ENCODE measurements at regions of chr11 and their contacts with region 1.

Region 1: GRCh38 chr11:69644071-69644961 is 3.4 kb downstream of the CCND1 start:
- DNase-seq: no peak
- H3K4me3 ChIP-seq: no peak overlapping the region
- CTCF ChIP-seq: no peak
- POLR2A ChIP-seq: no peak

Region 2: GRCh38 chr11:69101115-69101791 is 543.1 kb before region 1 on chr11:
- intact Hi-C with region 1: loop called (anchors 2 kb)
- DNase-seq: peak; percentile 56 to 94
- H3K4me3 ChIP-seq: no peak overlapping the region
- CTCF ChIP-seq: peak in 1 of 3 donors; percentile 92
- POLR2A ChIP-seq: no peak

Region 3: DNA sequence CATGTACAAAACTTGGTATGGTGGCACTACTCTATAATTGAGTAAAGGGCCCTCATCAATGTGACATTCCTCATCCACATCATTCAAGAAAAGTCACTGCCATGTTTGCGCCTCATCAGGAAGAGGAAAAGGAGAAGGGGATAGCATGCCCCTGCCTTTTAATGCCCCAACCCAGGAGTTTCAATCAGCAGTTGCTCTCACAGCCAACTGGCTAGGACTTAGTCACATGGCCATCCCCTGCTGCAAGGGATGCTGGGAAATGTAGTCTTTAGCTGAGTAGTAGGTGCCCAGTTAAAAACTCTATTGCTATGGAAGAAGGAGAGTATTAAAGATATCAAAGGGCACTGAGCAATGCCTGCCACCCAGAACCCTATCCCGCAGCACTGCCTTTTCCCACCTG is 14.3 kb before region 1 on chr11:
- intact Hi-C with region 1: no loop called
- DNase-seq: no peak
- H3K4me3 ChIP-seq: no peak overlapping the region
- CTCF ChIP-seq: no peak
- POLR2A ChIP-seq: no peak

Region 4: DNA sequence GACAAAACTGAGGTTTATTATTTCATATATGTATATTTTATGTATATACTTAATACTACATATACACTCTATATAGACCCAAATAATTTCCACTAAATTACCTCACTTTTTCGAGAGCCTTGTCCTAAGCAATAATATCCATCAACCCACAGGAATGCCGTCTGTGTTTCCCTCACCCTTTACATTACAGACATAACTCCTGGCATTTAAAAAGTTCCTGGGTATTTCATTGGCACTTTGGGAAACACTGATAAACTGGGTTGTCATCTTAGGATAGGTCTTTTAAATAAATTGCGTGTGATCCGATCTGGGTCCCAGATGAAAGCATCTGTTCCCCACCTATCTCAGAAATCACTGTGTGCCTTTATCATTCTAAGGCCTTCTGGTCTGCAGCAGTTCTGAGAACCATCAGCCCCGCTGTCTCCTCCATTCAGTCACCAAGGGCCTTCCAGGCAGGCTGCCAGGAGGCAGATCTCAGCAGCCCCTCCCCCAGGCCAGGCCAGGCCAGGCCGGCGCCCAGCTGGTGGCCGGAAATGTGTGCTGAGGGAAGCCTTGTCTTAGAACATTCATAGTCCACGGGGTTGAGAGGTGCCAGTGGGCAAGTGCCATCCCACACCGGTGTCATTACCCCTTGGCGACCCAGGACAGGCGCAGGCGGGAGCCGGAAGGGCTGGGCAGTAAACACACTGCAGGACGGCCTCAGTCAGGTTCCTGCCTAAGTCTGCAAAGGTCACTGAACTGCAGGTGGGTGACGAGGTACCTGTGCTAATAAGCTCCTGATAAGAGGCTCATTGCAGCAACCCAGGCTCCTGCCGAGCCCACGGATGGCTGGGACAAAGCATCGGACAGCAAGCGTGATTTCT is 56.2 kb after region 1 on chr11:
- intact Hi-C with region 1: no loop called
- DNase-seq: no peak
- H3K4me3 ChIP-seq: no peak overlapping the region
- CTCF ChIP-seq: no peak
- POLR2A ChIP-seq: no peak